HCT116 (cell line): ENCODE measurements at regions of chr10 and their contacts with region 1.

Region 1: DNA sequence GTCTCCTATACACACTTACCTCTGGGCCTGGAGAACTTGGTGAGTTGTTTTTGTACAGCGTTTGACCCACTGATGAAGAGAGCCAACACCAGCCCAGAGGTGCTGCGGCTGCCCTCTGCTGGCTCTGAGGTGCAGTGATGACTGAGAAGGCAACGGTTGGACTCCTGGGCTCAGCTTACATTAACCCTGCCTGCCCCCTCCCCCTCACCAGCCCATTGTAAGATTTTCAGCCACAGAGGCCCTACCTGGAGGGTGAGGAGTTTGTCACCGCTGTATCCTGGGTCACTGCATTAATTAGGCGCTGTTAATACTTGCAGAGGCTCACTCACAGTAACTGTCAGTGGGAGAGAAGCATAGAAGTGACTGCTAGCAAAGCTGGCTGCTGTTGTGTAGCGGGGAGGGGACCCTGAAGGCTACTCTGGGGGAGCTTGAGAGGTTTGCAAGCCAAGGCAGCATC is 19.0 kb upstream of the ANKRD2 start:
- DNase-seq: no peak
- ATAC-seq: peak; percentile 99
- H3K4me3 ChIP-seq: no peak overlapping the region
- H3K27ac ChIP-seq: 0 out of 2 replicates have a peak overlapping the region, but pooled peaks have one; percentile 7
- H3K4me1 ChIP-seq: peaks cover 10 to 27% of the 10 kb centered on the region in 2 experiments; a peak in 3 of 4 replicates
- H3K27me3 ChIP-seq: no peaks in the 10 kb centered on the region
- CTCF ChIP-seq: peak; percentile 89 to 94 (median 93)
- POLR2A ChIP-seq: no peak
- RAD21 ChIP-seq: peak; percentile 94

Region 2: DNA sequence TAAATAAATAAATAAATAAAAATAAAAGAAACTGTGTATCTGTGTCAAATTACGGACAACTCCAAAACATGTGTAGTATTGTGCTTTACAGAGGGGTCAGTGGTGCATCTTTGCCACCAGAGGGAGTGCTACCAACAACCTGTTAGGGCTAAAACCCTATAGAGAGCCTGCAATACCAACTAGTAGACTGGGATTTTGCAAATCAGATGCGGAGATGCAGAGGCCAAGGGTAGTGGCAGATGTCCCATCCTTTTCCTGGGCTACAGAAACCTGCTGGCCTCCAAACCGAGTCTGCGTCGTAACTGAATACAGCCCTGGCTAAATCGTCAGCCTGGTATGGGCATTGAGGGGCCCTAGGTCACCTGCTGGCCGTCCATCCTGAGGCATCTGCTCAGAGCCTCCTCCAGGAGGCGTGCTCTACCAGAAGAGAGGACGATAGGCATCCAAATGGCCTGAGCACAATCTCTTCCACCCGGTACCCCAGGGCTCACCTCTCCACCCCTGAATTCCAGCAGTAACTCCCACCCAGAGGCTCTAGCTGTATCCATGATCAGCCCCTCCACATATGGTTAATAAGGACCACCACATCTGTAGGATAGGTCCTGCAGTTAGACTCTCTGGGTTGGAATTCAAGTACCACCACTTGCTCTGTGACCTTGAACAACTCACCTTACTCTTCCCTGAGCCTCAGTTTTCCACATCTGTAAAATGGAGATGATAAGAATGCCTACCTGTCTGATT is 146.2 kb before region 1 on chr10:
- CTCF ChIA-PET with region 1: no interaction called
- POLR2A ChIA-PET with region 1: no interaction called
- RAD21 ChIA-PET with region 1: no interaction called
- intact Hi-C with region 1: loop called (anchors 2 kb)
- DNase-seq: peak; percentile 77
- ATAC-seq: peak; percentile 96
- H3K4me3 ChIP-seq: peak overlapping the region; percentile 25 to 31
- H3K27ac ChIP-seq: 0 out of 2 replicates have a peak overlapping the region, but pooled peaks have one; percentile 25
- H3K4me1 ChIP-seq: peaks cover 8 to 44% of the 10 kb centered on the region in 2 experiments; a peak in 3 of 4 replicates
- H3K27me3 ChIP-seq: no peaks in the 10 kb centered on the region
- CTCF ChIP-seq: peak; percentile 76 to 97 (median 80)
- POLR2A ChIP-seq: no peak
- RAD21 ChIP-seq: peak; percentile 81

Region 3: GRCh38 chr10:97463363-97464132 is 90.1 kb before region 1 on chr10:
- CTCF ChIA-PET with region 1: interaction called, 8 read pairs
- POLR2A ChIA-PET with region 1: no interaction called
- RAD21 ChIA-PET with region 1: interaction called, 3 to 4 read pairs
- intact Hi-C with region 1: loop called (anchors 1 kb)
- DNase-seq: peak; percentile 40
- ATAC-seq: peak; percentile 69
- H3K4me3 ChIP-seq: no peak overlapping the region
- H3K27ac ChIP-seq: peak overlapping the region; percentile 68
- H3K4me1 ChIP-seq: peaks cover 20 to 34% of the 10 kb centered on the region in 2 experiments
- H3K27me3 ChIP-seq: no peaks in the 10 kb centered on the region
- CTCF ChIP-seq: peak; percentile 82 to 95 (median 95)
- POLR2A ChIP-seq: no peak
- RAD21 ChIP-seq: peak; percentile 95

Region 4: GRCh38 chr10:97534746-97535367 is 18.7 kb before region 1 on chr10:
- CTCF ChIA-PET with region 1: interaction called, 12 read pairs
- POLR2A ChIA-PET with region 1: no interaction called
- RAD21 ChIA-PET with region 1: no interaction called
- intact Hi-C with region 1: loop called (anchors 1 kb)
- DNase-seq: no peak
- ATAC-seq: peak; percentile 84
- H3K4me3 ChIP-seq: no peak overlapping the region
- H3K27ac ChIP-seq: no peak overlapping the region
- H3K4me1 ChIP-seq: peaks cover 25 to 50% of the 10 kb centered on the region in 2 experiments
- H3K27me3 ChIP-seq: no peaks in the 10 kb centered on the region
- CTCF ChIP-seq: peak; percentile 83 to 91 (median 89); a peak in 5 of 6 replicates
- POLR2A ChIP-seq: no peak
- RAD21 ChIP-seq: peak; percentile 83

Region 5: DNA sequence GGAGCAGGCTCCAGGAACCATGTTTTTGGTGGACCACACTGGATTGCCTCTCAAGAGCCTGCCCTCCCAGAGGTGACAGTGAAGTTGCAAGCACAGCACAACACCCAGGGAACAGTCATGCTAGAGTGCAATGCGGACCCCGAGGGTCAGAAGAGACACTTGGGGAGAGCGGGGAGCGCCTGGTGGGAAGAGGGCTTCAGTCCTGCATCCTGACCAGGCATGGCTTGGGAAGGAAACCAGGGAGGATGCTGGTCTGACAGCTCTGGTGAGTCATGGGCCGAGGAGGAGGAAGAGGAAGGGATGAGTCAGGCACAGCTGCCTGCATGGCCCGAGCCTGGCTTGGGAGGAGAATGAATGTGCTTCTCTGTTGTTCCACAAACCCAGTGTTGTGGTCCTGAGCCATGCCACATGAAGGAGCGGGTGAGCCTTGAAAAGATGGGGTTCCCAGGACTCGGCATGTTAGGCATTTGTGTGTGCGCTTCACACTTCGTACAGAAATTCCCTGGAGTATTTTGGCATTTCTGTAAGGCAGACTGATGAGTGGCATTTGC is 10.5 kb before region 1 on chr10:
- CTCF ChIA-PET with region 1: interaction called, 20 read pairs
- POLR2A ChIA-PET with region 1: no interaction called
- RAD21 ChIA-PET with region 1: interaction called in 1 of 2 experiments, 3 read pairs
- intact Hi-C with region 1: no loop called
- DNase-seq: peak; percentile 85
- ATAC-seq: peak; percentile 77
- H3K4me3 ChIP-seq: peak overlapping the region in 1 of 2 experiments; percentile 57; a peak in 2 of 4 replicates
- H3K27ac ChIP-seq: peak overlapping the region; percentile 98
- H3K4me1 ChIP-seq: peaks cover 53 to 63% of the 10 kb centered on the region in 2 experiments
- H3K27me3 ChIP-seq: no peaks in the 10 kb centered on the region
- CTCF ChIP-seq: no peak
- POLR2A ChIP-seq: no peak
- RAD21 ChIP-seq: no peak

Region 6: DNA sequence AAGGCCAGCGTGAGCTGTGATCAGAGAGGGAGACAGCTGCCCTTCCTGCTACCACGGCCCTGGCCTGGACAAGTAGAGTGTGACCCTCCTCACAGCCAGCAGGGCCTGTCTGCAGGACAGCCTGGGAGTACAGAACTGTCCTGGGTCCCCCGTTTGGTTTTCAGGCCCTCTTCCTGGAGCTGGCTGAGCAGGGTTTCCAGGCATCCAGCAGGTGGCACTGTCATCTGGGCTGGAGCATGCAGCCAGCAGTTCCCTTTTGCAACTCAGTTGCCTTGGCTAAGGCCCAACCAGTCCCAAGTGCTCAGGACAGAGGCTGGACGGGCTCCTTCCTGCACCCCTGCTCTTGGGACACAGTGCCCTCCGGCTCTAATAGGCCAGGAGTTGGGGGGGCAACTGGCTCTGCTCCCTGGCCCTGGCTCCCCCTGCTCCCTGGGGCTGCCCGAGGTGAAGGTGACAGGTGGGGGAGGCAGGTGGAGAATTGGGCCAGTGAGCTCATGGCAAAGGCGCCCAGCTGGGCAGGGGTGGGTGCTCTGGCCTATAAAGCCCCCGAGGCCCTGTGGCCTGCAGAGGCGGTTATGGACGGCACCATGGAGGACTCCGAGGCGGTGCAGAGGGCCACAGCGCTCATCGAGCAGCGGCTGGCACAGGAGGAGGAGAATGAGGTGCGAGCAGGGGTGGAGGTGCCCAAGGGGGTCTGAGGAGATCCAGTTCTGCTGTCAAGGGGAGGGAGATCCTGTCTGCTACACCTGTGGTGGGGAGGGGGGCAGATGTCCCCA is 18.8 kb after region 1 on chr10 and contains the start of gene ANKRD2:
- CTCF ChIA-PET with region 1: interaction called, 16 read pairs
- POLR2A ChIA-PET with region 1: no interaction called
- RAD21 ChIA-PET with region 1: interaction called, 3 to 4 read pairs
- intact Hi-C with region 1: no loop called
- DNase-seq: peak; percentile 59
- ATAC-seq: peak; percentile 78
- H3K4me3 ChIP-seq: peak within 1 kb of the TSS in 1 of 2 experiments; percentile 51; a peak in 2 of 4 replicates
- H3K27ac ChIP-seq: peak within 1 kb of the TSS; percentile 68
- H3K4me1 ChIP-seq: peaks cover 53 to 60% of the 10 kb centered on the region in 2 experiments
- H3K27me3 ChIP-seq: no peaks in the 10 kb centered on the region
- CTCF ChIP-seq: peak; percentile 85 to 97 (median 93)
- POLR2A ChIP-seq: no peak
- RAD21 ChIP-seq: peak; percentile 93
- total RNA-seq, gene ANKRD2: 0.15 TPM